Posterior vena cava (tissue), 2 donors: ENCODE measurements at regions of chr12 and their contacts with region 1.

Region 1: DNA sequence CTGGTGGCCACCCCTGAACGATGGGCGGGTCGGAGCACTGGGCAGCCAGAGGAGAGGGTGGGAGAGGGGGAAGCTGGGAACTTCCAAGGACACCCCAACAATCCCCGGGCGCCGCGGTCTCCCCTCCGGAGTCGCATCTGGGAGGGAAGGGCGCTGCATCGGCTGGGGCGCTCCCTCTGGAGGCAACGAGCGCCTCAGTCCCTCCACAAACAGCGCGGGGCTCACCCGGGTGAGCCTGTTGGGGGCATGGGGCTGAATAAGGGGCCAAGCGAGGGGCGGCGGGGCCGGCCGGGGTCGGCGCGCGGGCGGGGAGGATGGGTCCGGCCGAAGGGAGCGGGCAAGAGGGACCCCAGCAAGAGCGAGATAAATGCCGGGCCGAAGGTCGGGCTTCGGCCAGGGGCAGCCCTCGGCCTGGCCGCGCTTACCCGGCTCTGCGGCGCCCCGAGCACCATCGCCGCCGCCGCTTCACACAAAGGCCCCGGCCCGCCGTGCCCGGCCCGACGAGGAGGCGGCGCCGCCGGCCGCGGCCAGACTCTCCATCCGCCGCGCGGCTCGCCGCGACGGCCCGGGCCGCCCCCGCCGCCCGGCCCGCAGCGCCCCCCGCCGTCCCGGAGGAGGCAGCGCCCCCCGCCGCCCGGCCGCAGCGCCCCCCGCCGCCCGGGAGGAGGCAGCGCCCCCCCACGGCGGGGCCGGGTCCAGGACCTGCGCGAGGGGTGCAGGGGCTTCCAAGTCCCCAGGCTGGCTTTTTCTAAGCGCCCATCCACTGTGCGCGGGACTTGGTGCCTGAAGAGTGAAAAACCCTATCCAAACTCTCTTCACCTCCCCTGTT is at the start of gene ZBTB39:
- DNase-seq: peak; percentile 85
- total RNA-seq, gene ZBTB39: 4.8 to 5.6 TPM

Region 2: GRCh38 chr12:57063991-57064685 is 57.9 kb after region 1 on chr12:
- intact Hi-C with region 1: loop called in 1 of 2 experiments (anchors 5 kb)
- DNase-seq: no peak

Region 3: GRCh38 chr12:57151741-57152630 is 145.8 kb after region 1 on chr12:
- intact Hi-C with region 1: no loop called
- DNase-seq: no peak